Mammary epithelial cell (primary cell): ENCODE measurements at regions of chr3 and their contacts with region 1.

Region 1: GRCh38 chr3:50611464-50612233 is at the start of gene CISH:
- DNase-seq: peak; percentile 92
- H3K4me3 ChIP-seq: peak within 1 kb of the TSS; percentile 61 to 82 (median 64)
- H3K27ac ChIP-seq: peak within 1 kb of the TSS; percentile 4
- H3K4me1 ChIP-seq: peaks cover 32% of the 10 kb centered on the region
- H3K27me3 ChIP-seq: no peaks in the 10 kb centered on the region
- CTCF ChIP-seq: peak; percentile 8 to 41
- total RNA-seq, gene CISH: 1.8 to 2.8 TPM

Region 2: DNA sequence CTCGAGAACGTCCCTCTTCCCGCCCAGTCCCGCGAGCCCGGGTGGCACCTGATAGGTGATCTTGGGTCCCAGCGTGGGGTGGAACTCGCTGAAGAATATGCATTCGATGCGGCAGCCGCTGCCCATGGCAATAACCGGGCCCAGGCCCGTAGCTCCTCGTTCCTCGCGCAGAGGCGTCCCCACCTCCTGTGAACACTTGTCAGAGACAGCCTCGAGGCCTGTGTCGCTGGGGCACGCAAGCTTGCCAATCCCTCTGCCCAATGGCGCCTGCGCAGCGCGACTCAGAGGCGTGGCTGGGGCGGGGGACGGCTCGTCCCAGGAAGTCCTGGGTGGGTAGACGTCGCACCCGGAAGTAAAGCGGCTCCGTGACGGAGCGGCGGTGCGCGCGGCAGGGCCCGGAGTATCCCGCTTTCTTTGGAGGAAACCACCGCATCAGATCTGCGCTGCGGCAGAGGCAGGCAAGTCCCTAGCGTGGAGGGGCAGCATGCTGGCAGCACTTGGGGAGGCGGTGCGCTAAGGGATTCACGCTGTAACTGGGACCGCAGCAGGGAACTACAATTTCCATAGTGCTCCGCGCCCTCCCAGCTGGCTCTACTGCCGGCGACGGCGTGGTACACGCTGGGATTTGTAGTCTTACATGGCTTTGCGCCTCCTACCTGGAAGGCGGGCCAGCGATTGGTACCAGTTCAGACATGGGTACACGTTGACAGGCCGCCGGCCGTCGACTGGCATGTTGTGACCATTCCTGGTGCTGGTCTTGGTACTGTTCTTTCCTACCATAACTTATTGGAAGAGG is 260.9 kb before region 1 on chr3 and contains the starts of genes CYB561D2 and NPRL2:
- CTCF ChIA-PET with region 1: no interaction called
- dilution Hi-C with region 1: no loop called
- in situ Hi-C with region 1: no loop called
- intact Hi-C with region 1: loop called (anchors 1 kb)
- DNase-seq: peak; percentile 94
- H3K4me3 ChIP-seq: peak within 1 kb of the TSS; percentile 58 to 88 (median 72)
- H3K27ac ChIP-seq: peak within 1 kb of the TSS; percentile 19
- H3K4me1 ChIP-seq: peaks cover 21% of the 10 kb centered on the region
- H3K27me3 ChIP-seq: no peaks in the 10 kb centered on the region
- CTCF ChIP-seq: no peak
- total RNA-seq, gene CYB561D2: 10.0 to 11.9 TPM
- total RNA-seq, gene NPRL2: 15.6 to 17.7 TPM

Region 3: GRCh38 chr3:50550079-50550741 is 61.4 kb before region 1 on chr3:
- CTCF ChIA-PET with region 1: no interaction called
- dilution Hi-C with region 1: no loop called
- in situ Hi-C with region 1: no loop called
- intact Hi-C with region 1: loop called (anchors 1 kb)
- DNase-seq: peak; percentile 13
- H3K4me3 ChIP-seq: no peak overlapping the region
- H3K27ac ChIP-seq: no peak overlapping the region
- H3K4me1 ChIP-seq: peaks cover 19% of the 10 kb centered on the region
- H3K27me3 ChIP-seq: no peaks in the 10 kb centered on the region
- CTCF ChIP-seq: peak; percentile 75 to 81

Region 4: GRCh38 chr3:50600841-50601591 is 10.6 kb before region 1 on chr3:
- CTCF ChIA-PET with region 1: interaction called, 3 read pairs
- dilution Hi-C with region 1: no loop called
- in situ Hi-C with region 1: no loop called
- intact Hi-C with region 1: loop called (anchors 1 kb)
- DNase-seq: peak; percentile 91
- H3K4me3 ChIP-seq: peak overlapping the region in 1 of 3 experiments; percentile 9
- H3K27ac ChIP-seq: peak overlapping the region; percentile 42
- H3K4me1 ChIP-seq: peaks cover 31% of the 10 kb centered on the region
- H3K27me3 ChIP-seq: no peaks in the 10 kb centered on the region
- CTCF ChIP-seq: no peak

Region 5: DNA sequence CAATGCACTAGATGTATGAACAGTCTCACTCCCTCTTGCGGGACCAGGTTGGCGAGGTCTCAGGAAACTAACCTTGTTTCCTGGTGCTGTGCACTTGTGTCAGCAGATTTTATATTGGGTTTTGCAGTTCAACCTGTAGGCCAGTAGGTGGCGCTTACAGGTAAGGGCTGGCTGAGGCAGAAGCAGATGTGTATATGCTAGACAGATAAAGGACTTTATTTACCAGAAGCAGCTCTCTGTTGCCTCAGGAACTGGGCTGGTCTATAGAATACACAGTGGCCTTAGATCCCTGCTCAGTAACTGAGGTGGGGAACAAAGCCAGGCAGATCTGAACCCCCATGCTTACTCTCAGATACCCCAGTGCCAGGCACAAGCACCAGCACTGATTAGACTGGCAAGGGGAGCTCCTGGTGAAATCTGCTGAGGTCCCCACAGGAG is 359.9 kb after region 1 on chr3:
- CTCF ChIA-PET with region 1: no interaction called
- dilution Hi-C with region 1: no loop called
- in situ Hi-C with region 1: no loop called
- intact Hi-C with region 1: loop called (anchors 1 kb)
- DNase-seq: peak; percentile 53
- H3K4me3 ChIP-seq: no peak overlapping the region
- H3K27ac ChIP-seq: no peak overlapping the region
- H3K4me1 ChIP-seq: no peaks in the 10 kb centered on the region
- H3K27me3 ChIP-seq: no peaks in the 10 kb centered on the region
- CTCF ChIP-seq: peak; percentile 88 to 91

Region 6: GRCh38 chr3:51311055-51311454 is 699.4 kb after region 1 on chr3:
- CTCF ChIA-PET with region 1: interaction called, 5 read pairs
- dilution Hi-C with region 1: no loop called
- in situ Hi-C with region 1: no loop called
- intact Hi-C with region 1: loop called (anchors 1 kb)
- DNase-seq: peak; percentile 18
- H3K4me3 ChIP-seq: no peak overlapping the region
- H3K27ac ChIP-seq: no peak overlapping the region
- H3K4me1 ChIP-seq: no peaks in the 10 kb centered on the region
- H3K27me3 ChIP-seq: no peaks in the 10 kb centered on the region
- CTCF ChIP-seq: peak; percentile 35 to 50

Region 7: GRCh38 chr3:51391075-51391567 is 779.5 kb after region 1 on chr3 and contains the start of gene RBM15B:
- CTCF ChIA-PET with region 1: no interaction called
- dilution Hi-C with region 1: loop called (anchors 5 kb)
- in situ Hi-C with region 1: loop called in 1 of 2 experiments (anchors 10 kb)
- intact Hi-C with region 1: loop called (anchors 1 kb)
- DNase-seq: peak; percentile 96
- H3K4me3 ChIP-seq: peak within 1 kb of the TSS; percentile 55 to 71 (median 59)
- H3K27ac ChIP-seq: peak within 1 kb of the TSS; percentile 33
- H3K4me1 ChIP-seq: peaks cover 54% of the 10 kb centered on the region
- H3K27me3 ChIP-seq: no peaks in the 10 kb centered on the region
- CTCF ChIP-seq: peak; percentile 62 to 92
- total RNA-seq, gene RBM15B: 33.3 to 40.8 TPM